Endothelial cell of umbilical vein (primary cell): ENCODE measurements at regions of chr9 and their contacts with region 1.

Region 1: DNA sequence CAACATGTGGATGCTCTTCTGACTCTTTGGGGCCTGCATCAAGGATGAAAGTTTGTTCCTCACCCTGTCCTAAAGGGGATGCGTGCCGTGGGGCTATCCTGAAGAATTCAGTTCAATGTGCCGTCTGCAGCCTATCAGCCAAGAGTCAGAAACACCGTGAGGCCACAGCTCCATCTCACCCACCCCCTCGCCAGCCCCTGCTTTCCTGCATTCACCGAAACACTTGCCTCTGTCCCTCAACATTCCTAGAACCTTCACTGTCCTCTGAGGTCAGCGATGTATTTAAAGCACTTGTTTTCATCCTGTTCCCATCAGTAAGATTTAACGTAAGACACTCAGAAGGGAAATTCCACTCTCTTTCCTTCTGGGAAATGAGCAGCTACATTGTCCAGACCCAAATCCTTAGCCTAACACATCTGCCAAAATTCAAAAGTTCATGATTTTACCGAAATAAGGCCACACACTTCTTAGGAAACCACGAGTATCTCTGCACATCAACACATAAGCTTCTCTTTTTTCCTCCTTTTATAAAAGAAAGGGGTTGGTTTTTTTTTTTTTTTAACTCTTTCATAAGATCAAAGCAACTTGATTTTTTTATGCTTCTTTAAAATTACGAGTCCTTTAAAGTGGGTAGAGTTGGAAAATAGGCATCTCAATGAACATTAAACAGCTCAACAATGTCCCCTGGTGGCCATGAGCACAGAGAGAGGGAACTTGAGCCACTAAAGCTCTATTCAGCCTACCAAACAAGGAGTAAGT is 100.7 kb downstream of the SUSD1 start:
- DNase-seq: peak; percentile 93
- H3K4me3 ChIP-seq: no peak overlapping the region
- H3K27ac ChIP-seq: peak overlapping the region; percentile 87
- H3K4me1 ChIP-seq: peaks cover 14% of the 10 kb centered on the region
- H3K27me3 ChIP-seq: no peaks in the 10 kb centered on the region
- CTCF ChIP-seq: peak; percentile 84 to 86
- POLR2A ChIP-seq: no peak

Region 2: DNA sequence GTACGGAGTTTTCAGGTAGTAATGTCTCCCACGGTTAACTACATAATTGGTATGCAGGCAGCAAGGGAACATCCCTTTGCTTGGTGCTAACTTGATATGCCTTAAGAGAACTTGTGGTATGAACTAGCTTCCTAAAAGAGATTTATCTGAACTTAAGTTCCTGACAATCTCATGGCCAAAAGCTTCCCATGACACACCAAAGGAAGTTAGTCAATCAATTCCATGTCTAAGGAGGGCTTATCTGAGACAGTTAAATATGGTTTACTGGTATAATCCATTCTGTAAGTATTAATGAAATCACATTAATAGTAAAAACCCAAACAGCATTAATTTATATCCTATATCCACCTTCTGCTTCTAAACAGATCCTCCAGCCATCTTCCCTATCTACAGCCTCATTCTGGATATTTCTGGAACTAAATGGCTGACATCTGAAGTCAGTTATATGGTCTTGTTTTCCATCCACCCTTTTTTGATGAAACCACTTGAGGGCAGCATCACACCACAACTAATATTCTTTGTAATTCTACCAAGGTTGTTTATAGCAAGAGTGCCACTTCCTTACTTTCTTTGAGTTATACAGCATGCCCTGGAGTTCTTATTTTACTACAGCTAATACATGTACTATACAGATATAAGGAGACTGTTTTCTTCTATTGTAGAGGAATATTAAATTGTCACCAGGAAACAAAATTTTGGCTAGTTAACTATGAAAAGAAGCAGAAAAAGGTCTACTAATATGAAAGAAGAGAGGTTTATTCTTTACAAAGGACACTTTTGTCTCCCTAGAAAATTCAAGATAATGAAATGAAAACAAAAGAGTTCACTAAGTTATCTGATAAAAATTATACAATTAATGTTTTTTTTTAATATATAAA is 314.4 kb before region 1 on chr9:
- CTCF ChIA-PET with region 1: interaction called, 256 read pairs
- POLR2A ChIA-PET with region 1: interaction called, 8 read pairs
- dilution Hi-C with region 1: no loop called
- intact Hi-C with region 1: loop called (anchors 1 kb)
- DNase-seq: peak; percentile 95
- H3K4me3 ChIP-seq: no peak overlapping the region
- H3K27ac ChIP-seq: peak overlapping the region; percentile 51
- H3K4me1 ChIP-seq: peaks cover 12% of the 10 kb centered on the region
- H3K27me3 ChIP-seq: no peaks in the 10 kb centered on the region
- CTCF ChIP-seq: peak; percentile 38 to 40
- POLR2A ChIP-seq: no peak

Region 3: DNA sequence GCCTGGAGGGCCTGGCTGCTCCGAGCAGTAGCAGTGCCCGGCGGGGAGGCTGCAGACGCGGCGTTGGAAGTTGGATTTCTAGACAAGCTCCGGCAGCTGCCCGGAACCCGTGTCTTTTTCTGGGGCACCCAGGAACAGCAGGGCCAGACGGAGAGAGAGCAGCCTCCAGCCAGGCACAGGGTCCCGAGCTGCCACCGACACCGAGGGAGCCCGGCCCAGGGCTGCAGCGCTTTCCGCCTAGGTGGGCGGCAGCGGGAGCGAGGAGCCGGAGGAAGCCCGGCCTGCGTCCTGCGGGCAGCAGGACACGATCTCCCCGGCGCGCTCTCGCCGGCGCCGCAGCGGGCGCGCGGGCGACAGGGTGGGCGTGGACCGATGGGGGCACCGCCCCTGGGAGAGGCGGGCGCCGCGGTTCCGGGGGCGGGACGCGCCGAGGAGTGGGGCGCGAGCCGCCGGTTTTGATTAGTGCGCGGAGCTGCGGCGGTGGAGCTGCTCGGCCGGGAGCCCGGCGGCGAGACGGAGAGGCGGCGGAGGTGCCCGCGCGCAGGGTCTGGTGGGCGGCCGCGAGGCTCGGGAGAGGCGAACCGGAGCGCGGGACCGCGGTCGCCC is 178.0 kb before region 1 on chr9 and contains the start of gene UGCG:
- CTCF ChIA-PET with region 1: interaction called, 41 read pairs
- POLR2A ChIA-PET with region 1: interaction called, 8 read pairs
- dilution Hi-C with region 1: no loop called
- intact Hi-C with region 1: loop called (anchors 1 kb)
- DNase-seq: peak; percentile 92
- H3K4me3 ChIP-seq: peak within 1 kb of the TSS; percentile 81 to 96 (median 90)
- H3K27ac ChIP-seq: peak within 1 kb of the TSS; percentile 82
- H3K4me1 ChIP-seq: peaks cover 23% of the 10 kb centered on the region
- H3K27me3 ChIP-seq: no peaks in the 10 kb centered on the region
- CTCF ChIP-seq: no peak
- POLR2A ChIP-seq: peak; percentile 95
- total RNA-seq, gene UGCG: 29.9 and 38.5 TPM in 2 replicates

Region 4: GRCh38 chr9:111937781-111938426 is 136.5 kb before region 1 on chr9:
- CTCF ChIA-PET with region 1: interaction called, 17 read pairs
- POLR2A ChIA-PET with region 1: no interaction called
- dilution Hi-C with region 1: no loop called
- intact Hi-C with region 1: no loop called
- DNase-seq: peak; percentile 52
- H3K4me3 ChIP-seq: no peak overlapping the region
- H3K27ac ChIP-seq: no peak overlapping the region
- H3K4me1 ChIP-seq: peaks cover 6% of the 10 kb centered on the region
- H3K27me3 ChIP-seq: no peaks in the 10 kb centered on the region
- CTCF ChIP-seq: no peak
- POLR2A ChIP-seq: no peak

Region 5: GRCh38 chr9:111975709-111976108 is 98.7 kb before region 1 on chr9:
- CTCF ChIA-PET with region 1: interaction called, 12 read pairs
- POLR2A ChIA-PET with region 1: no interaction called
- dilution Hi-C with region 1: no loop called
- intact Hi-C with region 1: no loop called
- DNase-seq: no peak
- H3K4me3 ChIP-seq: no peak overlapping the region
- H3K27ac ChIP-seq: no peak overlapping the region
- H3K4me1 ChIP-seq: peaks cover 10% of the 10 kb centered on the region
- H3K27me3 ChIP-seq: no peaks in the 10 kb centered on the region
- CTCF ChIP-seq: no peak
- POLR2A ChIP-seq: no peak

Region 6: DNA sequence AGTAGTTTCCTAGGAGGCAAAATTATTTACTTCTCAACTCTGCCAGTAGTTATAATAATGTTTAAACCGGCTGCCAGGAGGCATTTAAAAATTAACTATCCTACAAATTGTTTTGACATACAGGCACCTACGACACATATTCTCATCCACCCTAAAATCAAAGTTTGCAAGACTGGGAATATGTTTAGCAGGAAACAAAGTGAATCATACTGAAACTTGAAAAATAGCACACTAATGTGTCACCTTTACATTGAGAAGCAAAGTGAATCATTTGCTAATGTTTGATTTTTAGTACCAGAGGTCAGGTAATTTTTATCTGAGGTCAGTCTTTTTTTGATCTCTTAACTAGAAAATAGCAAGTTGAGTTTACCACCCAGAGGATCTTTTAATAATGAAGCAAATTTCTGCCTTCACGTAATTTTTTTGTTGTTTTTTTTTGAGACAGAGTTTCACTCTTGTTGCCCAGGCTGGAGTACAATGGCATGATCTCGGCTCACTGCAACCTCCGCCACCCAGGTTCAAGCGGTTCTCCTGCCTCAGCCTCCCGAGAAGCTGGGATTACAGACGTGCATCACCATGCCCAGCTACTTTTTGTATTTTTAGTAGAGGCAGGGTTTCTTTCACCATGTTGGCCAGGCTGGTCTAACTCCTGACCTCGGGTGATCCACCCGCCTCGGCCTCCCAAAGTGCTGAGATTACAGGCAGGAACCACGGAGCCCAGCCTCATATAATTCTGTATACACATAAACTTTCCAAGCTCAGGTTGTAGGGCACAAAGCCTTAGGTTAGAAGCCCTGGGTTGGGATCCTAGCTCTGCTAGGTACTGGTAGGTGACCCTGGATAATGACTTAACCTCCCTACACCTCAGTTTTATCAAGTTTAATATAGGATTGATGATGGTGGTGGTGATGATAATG is 53.5 kb before region 1 on chr9:
- CTCF ChIA-PET with region 1: interaction called, 25 read pairs
- POLR2A ChIA-PET with region 1: no interaction called
- dilution Hi-C with region 1: no loop called
- intact Hi-C with region 1: loop called (anchors 1 kb)
- DNase-seq: peak; percentile 74
- H3K4me3 ChIP-seq: no peak overlapping the region
- H3K27ac ChIP-seq: peak overlapping the region; percentile 64
- H3K4me1 ChIP-seq: peaks cover 24% of the 10 kb centered on the region
- H3K27me3 ChIP-seq: no peaks in the 10 kb centered on the region
- CTCF ChIP-seq: no peak
- POLR2A ChIP-seq: no peak

Region 7: DNA sequence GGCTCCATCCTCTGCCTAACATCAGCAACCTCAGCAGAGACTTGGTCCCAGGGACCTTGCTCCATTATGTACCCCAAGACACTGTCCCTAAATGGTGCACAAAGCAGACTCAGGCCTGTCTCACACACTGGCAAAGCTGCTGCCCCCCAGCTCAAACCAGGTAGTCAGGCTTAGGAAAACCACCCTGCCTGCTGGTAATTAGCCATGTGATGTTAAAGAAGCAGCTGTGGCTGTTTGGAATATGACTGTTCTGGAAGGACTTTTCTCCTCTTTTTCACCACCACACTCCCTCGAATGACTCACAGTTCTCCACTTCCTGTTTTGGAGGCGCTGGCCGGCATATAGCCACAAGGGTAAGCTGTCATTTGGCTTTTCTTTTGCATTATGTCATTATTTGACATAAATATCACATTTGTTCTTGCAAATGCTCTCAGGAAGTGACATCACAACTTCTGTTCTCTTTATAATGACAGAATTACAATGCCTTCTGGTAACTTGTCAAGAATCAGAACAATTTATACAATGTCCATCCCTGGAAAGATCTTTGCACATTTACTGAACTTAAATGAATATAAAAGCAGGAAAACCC is 13.2 kb before region 1 on chr9:
- CTCF ChIA-PET with region 1: interaction called, 12 read pairs
- POLR2A ChIA-PET with region 1: no interaction called
- dilution Hi-C with region 1: no loop called
- intact Hi-C with region 1: loop called (anchors 1 kb)
- DNase-seq: peak; percentile 98
- H3K4me3 ChIP-seq: no peak overlapping the region
- H3K27ac ChIP-seq: peak overlapping the region; percentile 97
- H3K4me1 ChIP-seq: peaks cover 35% of the 10 kb centered on the region
- H3K27me3 ChIP-seq: no peaks in the 10 kb centered on the region
- CTCF ChIP-seq: no peak
- POLR2A ChIP-seq: peak; percentile 27

Region 8: DNA sequence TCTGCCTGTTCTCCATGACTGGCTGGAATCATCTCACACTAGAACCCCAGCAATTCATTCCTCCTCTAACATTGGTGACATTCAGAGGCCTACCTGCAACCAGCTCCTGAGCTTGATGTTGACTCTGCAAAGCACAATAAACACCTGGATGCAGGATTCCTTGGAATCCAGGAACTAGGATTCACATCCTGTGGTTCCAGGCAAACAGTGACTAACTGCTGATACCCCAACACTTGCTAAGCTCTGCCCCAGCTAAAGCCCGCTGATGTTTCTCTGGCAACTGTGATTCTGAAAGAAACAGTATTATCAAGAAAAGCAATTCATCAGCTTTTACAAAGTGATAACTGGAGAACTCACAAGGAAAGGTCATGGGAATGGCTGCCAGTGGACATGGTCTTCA is 71.5 kb after region 1 on chr9:
- CTCF ChIA-PET with region 1: no interaction called
- POLR2A ChIA-PET with region 1: no interaction called
- dilution Hi-C with region 1: no loop called
- intact Hi-C with region 1: no loop called
- DNase-seq: no peak
- H3K4me3 ChIP-seq: no peak overlapping the region
- H3K27ac ChIP-seq: no peak overlapping the region
- H3K4me1 ChIP-seq: no peaks in the 10 kb centered on the region
- H3K27me3 ChIP-seq: no peaks in the 10 kb centered on the region
- CTCF ChIP-seq: no peak
- POLR2A ChIP-seq: no peak